Gastrocnemius medialis (tissue), 4 donors: ENCODE measurements at regions of chr17 and their contacts with region 1.

Region 1: DNA sequence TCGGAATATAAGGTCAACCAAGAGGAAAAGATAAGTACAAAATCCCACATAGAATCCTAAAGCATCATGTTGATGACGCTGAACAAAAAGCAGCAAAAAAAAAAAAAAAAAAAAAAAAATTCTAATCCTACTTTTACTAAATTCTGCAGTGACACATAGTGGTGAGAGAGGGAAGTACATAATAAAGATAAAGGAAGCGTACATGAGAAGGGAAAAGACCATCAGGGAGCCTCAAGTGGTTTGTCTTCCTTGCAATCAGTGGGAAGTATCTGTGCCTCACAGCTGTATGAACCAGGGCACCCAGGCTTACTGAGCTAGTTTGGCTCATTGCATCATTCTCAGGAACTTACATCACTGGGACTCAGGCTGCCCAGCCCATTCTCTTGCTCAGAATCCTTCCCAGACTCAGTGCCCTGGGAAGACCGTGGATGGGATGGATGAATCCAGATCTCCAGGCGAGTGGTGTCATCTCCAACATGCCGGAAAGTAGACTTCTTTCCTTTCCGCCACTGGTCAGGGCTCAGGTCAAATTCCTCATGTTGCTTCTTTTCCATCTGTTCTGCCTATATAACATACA is 21.2 kb downstream of the SMG6 start:
- DNase-seq: no peak
- ATAC-seq: peak; percentile 52 to 62
- H3K4me3 ChIP-seq: no peak overlapping the region
- H3K27ac ChIP-seq: no peak overlapping the region
- H3K4me1 ChIP-seq: no peaks in the 10 kb centered on the region
- H3K27me3 ChIP-seq: no peaks in the 10 kb centered on the region
- CTCF ChIP-seq: peak in 4 of 5 experiments; percentile 42 to 59 (median 50)
- POLR2A ChIP-seq: no peak

Region 2: DNA sequence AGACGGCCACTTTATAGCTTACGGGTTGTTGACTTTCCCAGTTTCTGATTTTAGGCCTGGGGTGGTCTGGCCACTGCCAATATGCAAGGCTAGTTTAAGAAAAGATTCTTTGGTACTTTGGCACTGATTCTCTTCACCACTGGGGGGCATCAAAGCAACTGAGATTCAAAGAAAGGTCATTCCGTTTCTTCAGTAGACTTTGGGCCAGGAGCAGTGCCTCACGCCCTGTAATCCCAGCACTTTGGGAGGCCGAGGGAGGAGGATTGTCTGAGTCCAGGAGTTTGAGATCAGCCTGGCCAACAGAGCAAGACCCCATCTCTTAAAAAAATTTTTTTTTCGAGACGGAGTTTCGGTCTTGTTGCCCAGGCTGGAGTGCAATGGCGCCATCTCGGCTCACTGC is 399.5 kb before region 1 on chr17:
- in situ Hi-C with region 1: loop called in 1 of 4 experiments (anchors 25 kb)
- intact Hi-C with region 1: no loop called
- DNase-seq: no peak
- ATAC-seq: peak in 1 of 2 donors; percentile 30
- H3K4me3 ChIP-seq: no peak overlapping the region
- H3K27ac ChIP-seq: no peak overlapping the region
- H3K4me1 ChIP-seq: no peaks in the 10 kb centered on the region
- H3K27me3 ChIP-seq: no peaks in the 10 kb centered on the region
- CTCF ChIP-seq: peak in 4 of 5 experiments; percentile 28 to 48 (median 36)
- POLR2A ChIP-seq: no peak

Region 3: GRCh38 chr17:2250140-2251095 is 32.0 kb before region 1 on chr17:
- in situ Hi-C with region 1: no loop called
- intact Hi-C with region 1: loop called (anchors 2 kb)
- DNase-seq: no peak
- ATAC-seq: no peak
- H3K4me3 ChIP-seq: no peak overlapping the region
- H3K27ac ChIP-seq: no peak overlapping the region
- H3K4me1 ChIP-seq: peaks cover 0 to 7% of the 10 kb centered on the region in 2 donors
- H3K27me3 ChIP-seq: no peaks in the 10 kb centered on the region
- CTCF ChIP-seq: no peak
- POLR2A ChIP-seq: no peak